Keratinocyte (primary cell): ENCODE measurements at regions of chr15 and their contacts with region 1.

Region 1: GRCh38 chr15:48250640-48251076 is 44.6 kb downstream of the SLC12A1 start:
- DNase-seq: no peak
- H3K4me3 ChIP-seq: no peak overlapping the region
- H3K27ac ChIP-seq: no peak overlapping the region
- H3K4me1 ChIP-seq: no peaks in the 10 kb centered on the region
- H3K27me3 ChIP-seq: no peaks in the 10 kb centered on the region
- CTCF ChIP-seq: peak; percentile 45 to 70 (median 56)

Region 2: GRCh38 chr15:47196057-47196456 is 1054.6 kb before region 1 on chr15:
- dilution Hi-C with region 1: loop called (anchors 25 kb)
- DNase-seq: peak; percentile 54
- H3K4me3 ChIP-seq: no peak overlapping the region
- H3K27ac ChIP-seq: no peak overlapping the region
- H3K4me1 ChIP-seq: no peaks in the 10 kb centered on the region
- H3K27me3 ChIP-seq: no peaks in the 10 kb centered on the region
- CTCF ChIP-seq: peak; percentile 89 to 99 (median 91)

Region 3: GRCh38 chr15:48046813-48047438 is 203.7 kb before region 1 on chr15:
- dilution Hi-C with region 1: no loop called
- DNase-seq: no peak
- H3K4me3 ChIP-seq: no peak overlapping the region
- H3K27ac ChIP-seq: no peak overlapping the region
- H3K4me1 ChIP-seq: no peaks in the 10 kb centered on the region
- H3K27me3 ChIP-seq: no peaks in the 10 kb centered on the region
- CTCF ChIP-seq: no peak